Vagina (tissue), 2 donors: ENCODE measurements at regions of chr6 and their contacts with region 1.

Region 1: DNA sequence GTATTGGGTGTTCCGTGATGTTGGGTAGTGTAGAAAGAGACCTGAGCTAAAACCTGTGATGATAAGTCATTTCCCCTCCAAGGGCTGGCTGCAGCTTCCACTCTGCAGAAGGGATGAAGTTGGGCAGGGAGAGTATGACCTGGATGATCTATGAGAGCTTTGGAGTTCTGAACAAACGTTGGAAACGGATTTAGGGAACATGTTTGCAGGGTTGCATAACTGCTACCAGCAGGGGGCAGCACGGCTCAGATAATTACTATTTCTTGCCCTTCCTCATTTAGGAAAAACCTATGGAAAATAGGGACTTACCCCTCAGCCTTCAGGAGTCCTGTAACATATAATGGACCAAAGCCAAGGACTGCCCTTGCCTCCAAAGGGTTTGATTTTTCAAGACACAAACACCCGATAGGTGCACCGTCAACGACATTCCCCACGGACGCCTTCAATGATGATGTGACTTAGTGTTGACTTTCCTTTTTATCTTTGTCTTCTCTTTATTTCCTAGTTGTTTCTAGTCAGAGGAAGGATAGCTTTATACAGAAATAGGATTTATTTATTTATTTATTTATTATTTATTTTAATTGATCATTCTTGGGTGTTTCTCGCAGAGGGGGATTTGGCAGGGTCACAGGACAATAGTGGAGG is 164.9 kb upstream of the SASH1 start:
- DNase-seq: no peak
- H3K4me3 ChIP-seq: no peak overlapping the region
- H3K27ac ChIP-seq: no peak overlapping the region
- H3K4me1 ChIP-seq: no peaks in the 10 kb centered on the region
- H3K27me3 ChIP-seq: no peaks in the 10 kb centered on the region
- CTCF ChIP-seq: peak; percentile 67 to 86 (median 82)
- POLR2A ChIP-seq: no peak

Region 2: DNA sequence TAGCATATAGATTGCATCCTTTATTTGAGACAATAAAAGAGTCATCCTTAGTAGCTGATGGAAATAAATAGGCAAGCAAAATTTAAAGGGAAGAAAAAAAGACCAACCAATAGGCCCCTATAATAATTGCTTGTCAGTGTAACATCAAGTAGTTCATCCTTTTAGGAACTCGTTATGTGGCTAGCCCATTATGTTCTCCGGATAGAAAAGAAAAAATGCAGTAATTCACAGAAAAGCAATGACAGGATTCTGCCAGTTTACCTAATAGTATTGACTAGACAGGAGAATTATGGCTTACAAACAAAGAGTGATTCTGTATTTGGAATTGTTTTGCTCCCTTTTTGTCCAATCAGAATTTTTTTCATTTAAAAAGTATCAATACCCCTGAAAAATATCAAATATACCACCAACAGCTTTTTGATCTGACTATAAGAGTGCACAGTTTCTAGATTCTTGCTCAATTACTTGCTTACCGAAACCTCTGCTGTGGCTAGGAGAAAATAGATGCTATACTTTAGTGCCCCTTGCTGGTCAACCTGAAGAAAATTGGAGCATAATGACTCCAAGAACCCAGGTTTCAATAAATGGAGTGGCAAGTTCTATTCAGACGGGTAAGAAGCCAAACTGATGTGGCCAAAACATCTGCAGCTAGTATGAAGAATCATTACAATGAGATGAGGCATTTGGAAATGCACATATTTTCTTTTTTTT is 73.4 kb after region 1 on chr6:
- intact Hi-C with region 1: loop called (anchors 5 kb)
- DNase-seq: no peak
- H3K4me3 ChIP-seq: no peak overlapping the region
- H3K27ac ChIP-seq: no peak overlapping the region
- H3K4me1 ChIP-seq: no peaks in the 10 kb centered on the region
- H3K27me3 ChIP-seq: no peaks in the 10 kb centered on the region
- CTCF ChIP-seq: peak in 2 of 3 experiments; percentile 4 to 44
- POLR2A ChIP-seq: no peak

Region 3: DNA sequence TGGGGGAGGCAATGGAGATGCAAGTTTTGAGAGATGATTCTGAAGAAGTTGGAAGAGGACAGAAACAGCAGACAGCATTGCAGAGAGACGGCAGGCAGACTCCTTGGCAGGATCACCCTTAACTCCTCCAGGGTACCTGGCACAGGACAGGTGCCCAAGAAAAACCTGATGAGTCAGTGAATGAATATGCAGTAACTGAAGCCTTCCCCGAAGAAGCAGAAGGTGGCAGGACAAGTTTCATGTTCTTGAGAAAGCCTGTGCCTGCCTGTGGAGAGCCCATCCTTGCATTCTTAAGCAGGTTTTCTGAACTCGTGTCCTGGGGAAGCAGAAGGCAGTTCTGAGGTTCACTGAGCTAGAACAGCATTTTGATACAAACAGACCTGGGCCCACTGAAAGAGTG is 85.3 kb after region 1 on chr6:
- intact Hi-C with region 1: no loop called
- DNase-seq: no peak
- H3K4me3 ChIP-seq: no peak overlapping the region
- H3K27ac ChIP-seq: no peak overlapping the region
- H3K4me1 ChIP-seq: peaks cover 26% of the 10 kb centered on the region
- H3K27me3 ChIP-seq: no peaks in the 10 kb centered on the region
- CTCF ChIP-seq: no peak
- POLR2A ChIP-seq: no peak

Region 4: GRCh38 chr6:148464319-148465010 is 286.8 kb after region 1 on chr6:
- intact Hi-C with region 1: loop called (anchors 5 kb)
- DNase-seq: peak in 1 of 2 donors; percentile 80
- H3K4me3 ChIP-seq: no peak overlapping the region
- H3K27ac ChIP-seq: peak overlapping the region; percentile 65
- H3K4me1 ChIP-seq: peaks cover 23% of the 10 kb centered on the region
- H3K27me3 ChIP-seq: no peaks in the 10 kb centered on the region
- CTCF ChIP-seq: peak; percentile 72 to 89 (median 88)
- POLR2A ChIP-seq: no peak